ENCODE measurements at regions of chr2 and their contacts with region 1.

Region 1: GRCh38 chr2:195656859-195657633 is at the start of gene SLC39A10:
- DNase-seq: peak; percentile 98
- ATAC-seq: peak; percentile 95
- H3K4me3 ChIP-seq: peak within 1 kb of the TSS; percentile 96
- H3K27ac ChIP-seq: peak within 1 kb of the TSS; percentile 85
- H3K4me1 ChIP-seq: peaks cover 6% of the 10 kb centered on the region
- H3K27me3 ChIP-seq: no peaks in the 10 kb centered on the region
- CTCF ChIP-seq: peak; percentile 20
- POLR2A ChIP-seq: peak; percentile 96
- RAD21 ChIP-seq: no peak
- total RNA-seq, gene SLC39A10: 64.7 and 92.8 TPM in 2 replicates

Region 2: DNA sequence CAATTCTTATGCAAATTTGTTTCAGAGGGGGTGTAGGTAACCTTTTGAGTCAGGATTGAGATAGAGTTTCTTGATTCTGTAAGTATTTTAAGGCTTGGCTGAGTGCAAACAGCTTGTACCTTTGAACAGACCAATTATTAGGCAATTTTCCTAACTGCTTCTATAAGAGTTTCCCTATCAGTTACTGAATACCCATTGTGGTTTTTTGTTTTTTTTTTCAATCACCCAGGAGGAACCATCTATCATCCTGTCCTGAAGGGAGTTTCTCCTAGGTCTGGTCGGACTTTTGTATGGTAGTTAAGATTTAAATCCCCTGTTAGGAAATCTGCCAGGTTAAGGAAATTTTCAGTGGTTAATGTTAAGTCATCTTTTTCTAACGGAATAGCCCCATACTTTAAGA is 319.4 kb before region 1 on chr2:
- CTCF ChIA-PET with region 1: interaction called, 4 read pairs
- POLR2A ChIA-PET with region 1: no interaction called
- dilution Hi-C with region 1: no loop called
- in situ Hi-C with region 1: no loop called
- intact Hi-C with region 1: loop called (anchors 5 kb)
- DNase-seq: no peak
- ATAC-seq: no peak
- H3K4me3 ChIP-seq: no peak overlapping the region
- H3K27ac ChIP-seq: no peak overlapping the region
- H3K4me1 ChIP-seq: no peaks in the 10 kb centered on the region
- H3K27me3 ChIP-seq: no peaks in the 10 kb centered on the region
- CTCF ChIP-seq: no peak
- POLR2A ChIP-seq: no peak
- RAD21 ChIP-seq: no peak

Region 3: GRCh38 chr2:195407782-195408181 is 249.3 kb before region 1 on chr2:
- CTCF ChIA-PET with region 1: interaction called, 3 read pairs
- POLR2A ChIA-PET with region 1: no interaction called
- dilution Hi-C with region 1: no loop called
- in situ Hi-C with region 1: no loop called
- intact Hi-C with region 1: loop called (anchors 2 kb)
- DNase-seq: peak; percentile 66
- ATAC-seq: no peak
- H3K4me3 ChIP-seq: no peak overlapping the region
- H3K27ac ChIP-seq: no peak overlapping the region
- H3K4me1 ChIP-seq: peaks cover 6% of the 10 kb centered on the region
- H3K27me3 ChIP-seq: no peaks in the 10 kb centered on the region
- CTCF ChIP-seq: no peak
- POLR2A ChIP-seq: no peak
- RAD21 ChIP-seq: no peak

Region 4: DNA sequence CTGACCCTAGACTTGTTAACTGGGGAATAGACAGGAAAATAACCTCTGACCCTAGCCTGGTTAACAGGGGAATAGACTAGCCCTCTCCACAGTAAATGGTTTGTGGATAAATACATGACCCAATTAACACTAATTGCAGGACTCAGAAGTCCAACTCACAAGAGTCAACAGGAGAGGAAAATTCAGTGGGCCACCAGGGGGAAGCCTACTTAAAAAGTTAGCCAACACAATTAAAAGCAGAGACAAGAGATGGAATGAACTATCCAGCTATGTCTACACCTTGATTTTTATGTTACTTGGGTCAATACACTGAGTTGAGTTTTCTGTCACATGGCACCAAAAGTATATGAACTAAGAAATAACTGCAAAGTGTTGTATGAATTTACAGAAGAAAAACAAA is 158.9 kb before region 1 on chr2:
- CTCF ChIA-PET with region 1: interaction called, 9 read pairs
- POLR2A ChIA-PET with region 1: interaction called, 3 read pairs
- dilution Hi-C with region 1: no loop called
- in situ Hi-C with region 1: no loop called
- intact Hi-C with region 1: loop called (anchors 2 kb)
- DNase-seq: peak; percentile 30
- ATAC-seq: no peak
- H3K4me3 ChIP-seq: no peak overlapping the region
- H3K27ac ChIP-seq: no peak overlapping the region
- H3K4me1 ChIP-seq: 0 out of 2 replicates have a peak, but pooled peaks cover 2% of the 10 kb centered on the region
- H3K27me3 ChIP-seq: no peaks in the 10 kb centered on the region
- CTCF ChIP-seq: 0 out of 2 replicates have a peak, but pooled peaks have one; percentile 29
- POLR2A ChIP-seq: no peak
- RAD21 ChIP-seq: peak; percentile 32; the same call in 1 of the 2 replicates

Region 5: DNA sequence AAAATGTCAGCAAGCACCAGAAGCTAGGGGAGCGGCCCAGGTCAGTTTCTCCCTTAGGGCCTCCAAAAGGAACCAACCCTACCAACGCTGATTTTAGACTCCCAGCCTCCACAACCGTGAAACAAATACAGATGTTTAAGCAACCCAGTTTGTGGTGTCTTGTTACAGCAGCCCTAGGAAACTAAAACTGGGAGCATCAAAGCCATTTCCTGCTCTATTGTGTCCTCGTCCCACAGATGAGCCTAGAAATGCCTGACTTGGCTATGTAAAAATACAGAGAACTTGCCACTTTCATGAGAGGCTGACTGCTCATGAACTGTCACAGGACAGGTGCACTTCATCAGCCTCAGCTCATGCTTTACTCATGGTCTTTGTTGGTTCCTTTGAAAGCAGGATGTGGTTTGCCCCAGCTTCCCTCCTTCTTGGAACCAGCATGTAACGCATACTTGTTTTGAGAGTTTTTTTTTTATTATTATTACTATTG is 97.6 kb before region 1 on chr2:
- CTCF ChIA-PET with region 1: interaction called, 6 read pairs
- POLR2A ChIA-PET with region 1: interaction called, 12 read pairs
- dilution Hi-C with region 1: no loop called
- in situ Hi-C with region 1: loop called (anchors 5 kb)
- intact Hi-C with region 1: loop called (anchors 1 kb)
- DNase-seq: peak; percentile 100
- ATAC-seq: peak; percentile 53
- H3K4me3 ChIP-seq: no peak overlapping the region
- H3K27ac ChIP-seq: peak overlapping the region; percentile 89
- H3K4me1 ChIP-seq: peaks cover 20% of the 10 kb centered on the region
- H3K27me3 ChIP-seq: no peaks in the 10 kb centered on the region
- CTCF ChIP-seq: no peak
- POLR2A ChIP-seq: peak; percentile 38; the same call in 1 of the 2 replicates
- RAD21 ChIP-seq: peak; percentile 24

Region 6: DNA sequence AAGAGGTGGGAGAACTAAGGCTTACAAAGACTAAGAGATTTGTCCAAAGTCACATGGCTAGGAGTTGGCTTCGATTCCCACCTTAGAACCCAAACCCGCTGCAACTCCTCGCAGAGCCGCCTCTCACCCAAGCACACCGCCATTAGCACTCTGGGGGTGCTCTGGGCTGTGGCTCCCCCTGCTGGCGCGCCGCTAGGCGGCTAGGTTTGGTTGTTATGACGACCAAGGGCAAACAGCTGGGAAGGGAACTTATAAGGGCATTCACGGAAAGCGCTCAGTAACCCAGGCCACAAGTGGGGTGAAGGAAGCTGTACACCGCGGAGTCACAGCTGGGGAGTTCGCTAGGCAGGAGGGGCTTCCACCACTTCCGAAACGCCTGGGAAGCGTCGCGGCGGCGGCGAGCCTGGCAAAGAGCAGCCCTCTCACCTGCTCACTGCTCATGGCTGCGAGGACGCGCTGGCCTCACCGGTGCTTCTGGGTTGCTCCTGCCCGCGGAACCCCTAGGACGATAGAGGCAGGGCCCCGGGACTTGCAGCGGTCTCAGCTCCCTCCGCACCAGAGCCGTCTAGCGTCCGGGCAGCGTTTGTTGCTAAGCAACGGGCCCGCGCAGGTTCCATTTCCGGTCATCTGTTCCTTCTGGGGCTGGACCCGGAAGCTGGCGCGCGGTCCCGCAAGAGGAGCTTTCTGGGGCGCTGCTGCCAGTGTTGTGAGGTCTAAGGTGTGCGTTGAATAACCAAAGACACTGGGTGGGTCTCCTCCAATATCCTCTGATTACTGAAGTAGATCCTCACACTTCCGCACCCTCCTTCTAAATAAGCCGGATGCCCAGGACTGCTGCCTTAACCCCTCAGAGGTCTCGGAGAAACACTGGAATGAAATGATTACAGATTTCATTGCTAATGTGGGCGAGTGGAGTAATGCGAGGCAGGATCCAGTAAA is 411.5 kb after region 1 on chr2 and contains the start of gene DNAH7:
- CTCF ChIA-PET with region 1: no interaction called
- POLR2A ChIA-PET with region 1: no interaction called
- dilution Hi-C with region 1: no loop called
- in situ Hi-C with region 1: loop called (anchors 5 kb)
- intact Hi-C with region 1: no loop called
- DNase-seq: peak; percentile 80
- ATAC-seq: peak; percentile 96
- H3K4me3 ChIP-seq: peak within 1 kb of the TSS; percentile 81
- H3K27ac ChIP-seq: peak within 1 kb of the TSS; percentile 38
- H3K4me1 ChIP-seq: no peaks in the 10 kb centered on the region
- H3K27me3 ChIP-seq: no peaks in the 10 kb centered on the region
- CTCF ChIP-seq: peak; percentile 27; the same call in 1 of the 2 replicates
- POLR2A ChIP-seq: peak; percentile 47; the same call in 1 of the 2 replicates
- RAD21 ChIP-seq: peak; percentile 14; the same call in 1 of the 2 replicates
- total RNA-seq, gene DNAH7: 0.28 and 0.36 TPM in 2 replicates